Cardiac septum (tissue), 1 donor: ENCODE measurements at regions of chr5 and their contacts with region 1.

Region 1: DNA sequence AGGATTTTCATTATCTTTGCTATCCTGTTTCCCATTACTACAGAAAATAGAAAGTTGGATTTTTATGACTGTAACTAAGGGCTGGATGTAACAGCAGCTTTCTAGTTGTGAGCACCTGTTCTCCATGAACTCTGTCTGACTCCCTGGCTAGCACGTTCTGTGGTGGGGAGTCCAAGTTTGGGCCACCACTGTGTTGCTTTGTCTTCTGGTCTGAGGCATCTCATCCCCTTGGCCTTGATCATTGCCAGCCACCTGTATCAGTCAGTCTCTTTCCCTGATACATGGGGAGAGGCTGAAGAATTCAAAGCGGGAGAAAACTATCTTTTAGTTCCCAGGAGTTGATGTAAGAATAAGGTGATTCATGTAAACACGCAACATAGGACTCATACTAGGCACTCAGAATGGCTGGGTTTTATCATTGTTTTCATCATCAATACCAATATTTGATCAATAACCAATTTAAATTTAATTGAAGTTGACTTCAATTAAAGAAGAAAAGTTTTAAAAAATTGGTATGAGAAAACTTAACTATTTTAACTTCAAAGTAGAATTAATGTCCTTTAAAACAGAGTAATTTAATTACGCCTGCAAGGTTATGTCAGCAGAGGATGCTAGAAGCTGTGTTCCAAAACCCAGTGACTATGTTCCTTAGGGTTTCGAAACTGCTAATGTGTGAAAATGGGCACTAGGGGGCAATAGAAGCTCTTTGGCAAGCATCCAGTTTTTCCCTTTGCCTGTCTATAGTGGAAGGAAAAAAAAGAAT is 33.6 kb downstream of the WDR70 start:
- DNase-seq: no peak

Region 2: GRCh38 chr5:36657563-36657995 is 755.1 kb before region 1 on chr5:
- intact Hi-C with region 1: no loop called
- DNase-seq: no peak

Region 3: GRCh38 chr5:37146896-37147295 is 265.8 kb before region 1 on chr5:
- intact Hi-C with region 1: no loop called
- DNase-seq: no peak

Region 4: DNA sequence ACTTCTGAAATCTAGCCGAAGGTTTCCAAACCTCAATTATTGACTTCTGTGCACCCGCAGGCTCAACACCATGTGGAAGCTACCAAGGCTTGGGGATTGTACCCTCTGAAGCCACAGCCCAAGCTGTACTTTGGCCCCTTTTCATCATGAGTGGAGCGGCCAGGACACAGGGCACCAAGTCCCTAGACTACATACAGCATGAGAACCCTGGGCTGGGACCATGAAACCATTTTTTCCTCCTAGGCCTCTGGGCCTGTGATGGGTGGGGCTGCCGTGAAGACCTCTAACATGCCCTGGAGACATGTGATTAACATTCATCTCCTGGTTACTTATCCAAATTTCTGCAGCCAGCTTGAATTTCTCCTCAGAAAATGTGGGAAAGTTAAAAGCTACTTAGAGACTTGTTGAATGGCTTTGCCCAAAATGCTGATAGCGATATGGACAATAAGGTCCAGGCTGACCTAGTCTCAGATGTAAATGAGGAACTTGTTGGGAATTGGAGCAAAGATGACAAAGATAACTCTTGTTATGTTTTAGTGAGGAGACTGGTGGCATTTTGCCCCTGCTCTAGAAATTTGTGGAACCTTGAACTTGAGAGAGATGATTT is 129.4 kb before region 1 on chr5:
- intact Hi-C with region 1: no loop called
- DNase-seq: no peak

Region 5: DNA sequence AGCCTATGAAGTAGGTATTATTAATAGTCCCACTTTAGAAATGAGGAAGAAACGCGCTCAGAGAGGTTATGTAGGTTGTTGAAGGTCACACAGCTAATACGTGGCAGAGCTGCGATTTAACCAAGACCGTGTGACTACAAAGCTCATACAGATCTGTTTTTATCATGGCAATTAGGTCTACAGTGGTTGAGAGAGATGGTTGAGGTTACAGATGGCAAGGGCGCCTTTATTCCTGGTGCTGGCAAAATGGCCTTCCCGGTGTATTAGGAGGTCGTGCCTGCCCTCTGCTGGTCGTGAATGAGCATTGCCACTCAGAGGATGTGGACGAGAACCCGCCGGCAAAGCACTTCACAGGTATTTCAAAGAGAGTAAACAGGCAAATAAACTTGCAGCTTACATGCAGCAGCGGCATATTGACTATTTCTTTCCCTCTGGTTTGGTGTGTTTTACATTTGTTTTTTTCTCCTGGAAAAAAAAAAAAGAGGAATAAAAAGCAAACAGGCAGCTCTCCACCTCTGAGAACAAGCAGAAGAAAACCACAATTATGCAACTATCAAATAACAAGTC is 780.4 kb after region 1 on chr5:
- intact Hi-C with region 1: loop called (anchors 10 kb)
- DNase-seq: peak; percentile 80